Activated T-helper 2 cell treated with anti-CD3 and anti-CD28 coated beads, Interferon-gamma antibody, Interleukin-2, Interleukin-4, amounts not matched to agents 10 μg/mL and 5 μg/mL and 100 μg/mL, durations not matched to agents 14 hours and 24 hours and 36 hours (primary cell): ENCODE measurements at regions of chr4 and their contacts with region 1.

Region 1: GRCh38 chr4:77586951-77587383 is 18.7 kb upstream of the CXCL13 start:
- DNase-seq: peak; percentile 51
- H3K4me3 Mint-ChIP-seq: peak overlapping the region; percentile 65
- H3K27ac Mint-ChIP-seq: peak overlapping the region; percentile 67
- H3K4me1 Mint-ChIP-seq: peaks cover 61% of the 10 kb centered on the region
- H3K27me3 Mint-ChIP-seq: no peaks in the 10 kb centered on the region

Region 2: GRCh38 chr4:76067652-76068286 is 1519.2 kb before region 1 on chr4:
- intact Hi-C with region 1: loop called (anchors 10 kb)
- DNase-seq: peak; percentile 45
- H3K4me3 Mint-ChIP-seq: no peak overlapping the region
- H3K27ac Mint-ChIP-seq: no peak overlapping the region
- H3K4me1 Mint-ChIP-seq: peaks cover 2% of the 10 kb centered on the region
- H3K27me3 Mint-ChIP-seq: no peaks in the 10 kb centered on the region

Region 3: DNA sequence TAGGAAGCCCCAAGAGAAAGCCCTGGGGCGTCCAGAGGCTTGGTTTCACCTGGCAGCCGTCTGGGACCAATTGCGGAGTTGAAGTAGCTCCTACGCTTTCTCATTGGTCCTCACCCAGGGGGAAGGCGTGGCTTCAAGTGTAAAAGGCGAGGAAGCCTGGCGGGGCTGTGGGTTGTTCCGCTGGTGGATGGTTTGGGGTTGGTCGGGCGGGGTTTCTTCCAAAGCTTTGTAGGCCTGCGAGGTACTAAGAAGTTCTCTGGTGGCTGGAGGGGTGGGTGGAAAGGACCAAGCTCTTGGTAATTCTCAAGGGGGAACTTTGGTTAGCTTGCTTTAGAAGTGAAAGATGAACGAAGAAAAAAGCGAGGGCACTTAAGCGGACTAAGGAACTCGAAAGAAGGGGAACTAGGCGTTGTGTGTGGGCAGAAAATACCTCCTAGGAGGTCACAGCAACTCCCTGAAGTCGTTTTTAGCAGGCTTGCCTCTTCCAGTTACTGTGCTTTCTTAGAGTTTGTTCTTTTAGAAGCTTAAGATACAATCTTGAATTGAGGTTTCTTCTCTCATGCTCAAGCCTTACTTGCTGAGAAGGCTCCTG is 393.4 kb before region 1 on chr4:
- intact Hi-C with region 1: loop called (anchors 2 kb)
- DNase-seq: peak; percentile 77
- H3K4me3 Mint-ChIP-seq: peak overlapping the region; percentile 81
- H3K27ac Mint-ChIP-seq: peak overlapping the region; percentile 97
- H3K4me1 Mint-ChIP-seq: peaks cover 47% of the 10 kb centered on the region
- H3K27me3 Mint-ChIP-seq: peaks cover 3% of the 10 kb centered on the region

Region 4: DNA sequence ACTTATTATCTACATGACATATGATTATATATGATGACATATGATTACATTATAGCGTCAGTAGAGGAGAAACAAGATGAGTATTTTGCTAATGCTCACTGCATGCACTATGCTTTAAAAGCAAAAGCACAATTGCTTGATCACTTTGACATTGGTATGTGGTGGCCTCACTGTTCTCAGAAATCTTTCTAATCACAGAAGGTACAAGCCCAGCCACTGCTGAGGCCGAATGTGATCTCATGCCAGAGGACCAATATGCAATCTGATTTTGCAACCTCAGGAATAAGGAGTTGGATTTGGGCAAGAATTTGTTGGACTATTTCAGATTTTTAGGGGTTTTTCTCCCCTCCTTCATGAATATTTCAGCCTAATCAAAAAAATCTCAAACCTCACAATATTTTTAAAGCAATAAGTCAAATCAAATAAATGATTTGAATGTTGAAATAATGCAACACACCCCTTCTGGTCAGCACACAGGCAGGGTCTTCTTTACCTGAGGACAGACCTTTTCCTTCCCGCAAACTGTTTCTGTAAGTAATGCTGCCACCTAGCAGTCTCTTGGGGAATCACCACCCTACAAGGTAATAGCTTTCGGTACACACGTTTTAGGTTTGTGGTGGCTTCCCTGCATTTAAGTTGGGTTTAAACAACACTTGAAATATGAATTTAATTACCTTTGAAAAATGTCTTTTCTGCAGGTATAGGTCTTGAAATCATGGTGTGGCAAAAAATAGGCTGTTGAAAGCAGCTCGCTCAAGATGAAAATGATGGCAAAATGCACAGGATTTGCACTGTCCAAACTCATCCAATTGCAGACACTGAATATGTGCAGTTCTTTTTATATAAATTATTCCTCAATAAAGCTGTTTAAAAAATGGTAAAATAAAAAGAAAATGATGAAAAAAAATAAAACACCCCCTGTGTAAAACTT is 13.8 kb after region 1 on chr4:
- intact Hi-C with region 1: loop called (anchors 1 kb)
- DNase-seq: no peak
- H3K4me3 Mint-ChIP-seq: no peak overlapping the region
- H3K27ac Mint-ChIP-seq: no peak overlapping the region
- H3K4me1 Mint-ChIP-seq: peaks cover 40% of the 10 kb centered on the region
- H3K27me3 Mint-ChIP-seq: peaks cover 10% of the 10 kb centered on the region

Region 5: GRCh38 chr4:77852892-77853495 is 266.0 kb after region 1 on chr4:
- intact Hi-C with region 1: loop called (anchors 2 kb)
- DNase-seq: peak; percentile 70
- H3K4me3 Mint-ChIP-seq: peak overlapping the region; percentile 72
- H3K27ac Mint-ChIP-seq: peak overlapping the region; percentile 93
- H3K4me1 Mint-ChIP-seq: peaks cover 52% of the 10 kb centered on the region
- H3K27me3 Mint-ChIP-seq: no peaks in the 10 kb centered on the region

Region 6: GRCh38 chr4:78656968-78657445 is 1070.0 kb after region 1 on chr4:
- intact Hi-C with region 1: loop called (anchors 2 kb)
- DNase-seq: no peak
- H3K4me3 Mint-ChIP-seq: peak overlapping the region; percentile 24
- H3K27ac Mint-ChIP-seq: peak overlapping the region; percentile 37
- H3K4me1 Mint-ChIP-seq: peaks cover 42% of the 10 kb centered on the region
- H3K27me3 Mint-ChIP-seq: peaks cover 12% of the 10 kb centered on the region